ENCODE measurements at regions of chr3 and their contacts with region 1.

Region 1: DNA sequence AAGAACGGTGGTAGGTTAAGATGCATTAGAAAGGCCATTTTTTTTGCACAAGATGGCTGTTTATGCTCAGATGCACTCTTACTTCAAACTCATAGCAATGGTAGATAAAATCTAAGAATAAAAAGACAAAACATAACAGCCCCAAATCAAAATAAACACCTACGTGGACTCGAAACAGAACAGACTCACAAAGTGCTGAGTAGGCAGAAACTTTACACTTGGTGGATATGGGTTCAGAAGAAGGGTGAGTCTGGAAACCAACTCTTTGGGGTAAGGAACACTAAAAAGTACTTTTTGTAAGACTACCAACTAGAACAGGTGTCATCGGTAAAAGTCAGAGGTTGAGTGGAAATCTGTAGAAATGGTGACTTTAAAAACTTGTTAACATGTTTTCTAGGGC is 468.2 kb downstream of the OTOL1 start:
- DNase-seq: no peak
- H3K4me3 ChIP-seq: no peak overlapping the region
- H3K27ac ChIP-seq: no peak overlapping the region
- H3K4me1 ChIP-seq: no peaks in the 10 kb centered on the region
- H3K27me3 ChIP-seq: no peaks in the 10 kb centered on the region
- CTCF ChIP-seq: no peak
- POLR2A ChIP-seq: no peak

Region 2: DNA sequence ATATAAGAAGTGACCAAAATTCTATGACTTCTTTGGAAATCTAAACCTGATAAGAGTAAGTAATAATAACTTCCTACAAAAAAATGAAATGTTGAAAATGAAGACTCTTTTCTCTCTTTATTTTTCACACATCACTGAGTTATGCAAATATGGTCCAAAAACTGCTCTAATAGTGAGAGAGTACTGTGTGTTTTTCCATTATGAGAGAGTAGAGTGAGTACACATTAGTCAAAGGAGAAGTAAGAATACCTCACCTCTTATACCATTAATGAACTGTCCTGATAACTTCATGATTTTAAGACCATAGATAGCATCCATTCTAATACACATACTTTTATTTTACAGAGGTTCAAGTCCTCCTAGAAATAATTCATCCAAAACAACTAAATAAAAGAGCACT is 1803.2 kb after region 1 on chr3:
- intact Hi-C with region 1: loop called (anchors 5 kb)
- DNase-seq: no peak
- H3K4me3 ChIP-seq: no peak overlapping the region
- H3K27ac ChIP-seq: no peak overlapping the region
- H3K4me1 ChIP-seq: no peaks in the 10 kb centered on the region
- H3K27me3 ChIP-seq: no peaks in the 10 kb centered on the region
- CTCF ChIP-seq: no peak
- POLR2A ChIP-seq: no peak

Measured in vagina (tissue), 2 donors.